Mammary epithelial cell (primary cell): ENCODE measurements at regions of chr6 and their contacts with region 1.

Region 1: GRCh38 chr6:9250852-9251251 is 815.5 kb upstream of the SLC35B3 start:
- DNase-seq: peak; percentile 61
- H3K4me3 ChIP-seq: no peak overlapping the region
- H3K27ac ChIP-seq: no peak overlapping the region
- H3K4me1 ChIP-seq: no peaks in the 10 kb centered on the region
- H3K27me3 ChIP-seq: no peaks in the 10 kb centered on the region
- CTCF ChIP-seq: peak; percentile 72 to 85

Region 2: GRCh38 chr6:8983188-8983688 is 267.6 kb before region 1 on chr6:
- CTCF ChIA-PET with region 1: no interaction called
- dilution Hi-C with region 1: no loop called
- in situ Hi-C with region 1: no loop called
- intact Hi-C with region 1: loop called (anchors 1 kb)
- DNase-seq: peak; percentile 47
- H3K4me3 ChIP-seq: no peak overlapping the region
- H3K27ac ChIP-seq: no peak overlapping the region
- H3K4me1 ChIP-seq: no peaks in the 10 kb centered on the region
- H3K27me3 ChIP-seq: no peaks in the 10 kb centered on the region
- CTCF ChIP-seq: peak; percentile 96 to 97

Region 3: GRCh38 chr6:9233686-9234085 is 17.2 kb before region 1 on chr6:
- CTCF ChIA-PET with region 1: no interaction called
- dilution Hi-C with region 1: no loop called
- in situ Hi-C with region 1: no loop called
- intact Hi-C with region 1: no loop called
- DNase-seq: no peak
- H3K4me3 ChIP-seq: no peak overlapping the region
- H3K27ac ChIP-seq: no peak overlapping the region
- H3K4me1 ChIP-seq: no peaks in the 10 kb centered on the region
- H3K27me3 ChIP-seq: no peaks in the 10 kb centered on the region
- CTCF ChIP-seq: no peak

Region 4: DNA sequence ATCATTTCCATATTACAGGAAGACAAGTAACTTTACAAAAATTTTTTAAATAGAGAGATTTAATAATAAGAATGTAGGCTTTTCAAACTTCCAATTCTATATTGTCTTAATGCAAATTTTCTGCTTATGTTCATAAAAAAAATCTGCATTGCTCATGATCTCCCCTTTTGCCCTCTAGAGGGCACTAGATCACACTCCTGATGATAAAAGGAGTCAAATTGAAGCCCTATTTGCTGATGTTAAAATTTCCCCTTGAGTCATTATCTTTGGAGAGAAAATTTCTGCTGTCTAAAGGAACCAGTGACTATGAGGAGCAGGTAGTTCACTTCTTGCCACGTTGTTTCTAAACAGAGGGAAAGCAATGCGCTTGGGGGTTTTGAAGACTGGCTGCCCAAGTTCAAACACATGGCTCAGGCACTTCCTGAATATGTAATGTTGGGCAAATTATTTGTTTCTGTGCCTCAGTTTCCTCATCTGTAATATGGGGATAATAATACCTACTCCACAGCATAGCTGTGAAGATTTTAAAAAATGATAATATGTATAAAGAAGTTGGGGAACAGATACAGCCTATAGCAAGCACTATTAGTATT is 289.8 kb after region 1 on chr6:
- CTCF ChIA-PET with region 1: no interaction called
- dilution Hi-C with region 1: no loop called
- in situ Hi-C with region 1: no loop called
- intact Hi-C with region 1: loop called (anchors 2 kb)
- DNase-seq: peak; percentile 72
- H3K4me3 ChIP-seq: no peak overlapping the region
- H3K27ac ChIP-seq: no peak overlapping the region
- H3K4me1 ChIP-seq: no peaks in the 10 kb centered on the region
- H3K27me3 ChIP-seq: no peaks in the 10 kb centered on the region
- CTCF ChIP-seq: peak; percentile 74 to 80

Region 5: DNA sequence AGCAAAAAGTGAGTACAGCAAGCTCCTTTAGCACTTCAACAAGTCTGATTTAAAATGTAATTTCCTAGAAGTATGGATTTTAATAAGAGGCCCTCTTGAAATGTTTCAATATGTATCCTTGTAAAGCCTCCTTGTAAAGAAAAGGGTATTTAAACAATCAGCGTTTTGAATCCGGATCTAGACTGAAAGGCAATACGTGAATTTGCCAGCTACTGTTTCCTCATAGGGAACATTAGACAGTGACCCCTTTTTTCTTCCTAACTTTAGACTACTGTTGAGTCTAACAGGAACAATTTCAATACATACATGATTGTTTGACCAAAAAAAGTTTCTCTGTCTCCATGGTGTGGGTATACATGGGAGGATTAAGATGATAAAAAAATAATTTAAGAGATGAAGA is 769.0 kb after region 1 on chr6:
- CTCF ChIA-PET with region 1: no interaction called
- dilution Hi-C with region 1: no loop called
- in situ Hi-C with region 1: no loop called
- intact Hi-C with region 1: loop called (anchors 10 kb)
- DNase-seq: no peak
- H3K4me3 ChIP-seq: no peak overlapping the region
- H3K27ac ChIP-seq: no peak overlapping the region
- H3K4me1 ChIP-seq: no peaks in the 10 kb centered on the region
- H3K27me3 ChIP-seq: no peaks in the 10 kb centered on the region
- CTCF ChIP-seq: no peak